Common myeloid progenitor, CD34-positive (primary cell): ENCODE measurements at regions of chr2 and their contacts with region 1.

Region 1: GRCh38 chr2:143162123-143162837 is 33.1 kb downstream of the ARHGAP15 start:
- DNase-seq: peak; percentile 81 to 90 (median 89)
- H3K4me3 ChIP-seq: peak overlapping the region in 1 of 7 experiments; percentile 5
- H3K27ac ChIP-seq: no peak overlapping the region
- H3K4me1 ChIP-seq: peaks cover 8 to 53% (median 28%) of the 10 kb centered on the region in 4 experiments
- H3K27me3 ChIP-seq: no peaks in the 10 kb centered on the region

Region 2: DNA sequence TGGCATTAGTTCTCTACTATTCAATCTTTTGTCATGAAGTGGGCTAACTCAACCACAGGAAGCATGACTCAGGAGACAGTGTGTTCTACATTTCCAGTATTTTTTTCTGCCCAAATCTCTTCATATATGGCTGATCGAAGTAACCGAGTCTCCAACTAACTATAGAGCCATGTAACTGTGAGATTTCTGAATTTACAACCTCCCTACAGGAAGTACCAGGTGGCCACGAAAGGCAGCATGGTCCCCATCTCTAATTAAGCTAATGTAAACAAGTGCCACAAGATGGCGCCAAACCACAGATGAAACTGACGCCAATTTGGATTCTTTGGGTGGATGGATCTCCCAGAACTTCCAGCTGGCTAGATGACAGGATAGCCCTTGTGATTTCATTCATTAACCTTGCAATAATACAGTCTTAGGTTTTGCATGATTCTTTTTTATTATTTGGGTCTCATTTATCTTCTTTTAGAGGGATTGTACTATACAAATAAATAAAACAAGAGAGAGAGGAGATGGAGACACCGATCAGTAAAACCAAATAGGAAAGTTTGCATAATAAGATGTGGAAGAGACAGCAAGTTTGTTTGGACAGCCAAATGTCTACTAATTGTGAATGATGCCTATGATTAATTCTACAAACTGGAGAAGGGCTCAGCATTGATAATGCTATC is 51.4 kb before region 1 on chr2:
- CTCF ChIA-PET with region 1: interaction called, 89 read pairs
- POLR2A ChIA-PET with region 1: no interaction called
- DNase-seq: peak; percentile 81 to 90 (median 88)
- H3K4me3 ChIP-seq: peak overlapping the region in 5 of 7 experiments; percentile 21 to 64 (median 43)
- H3K27ac ChIP-seq: peak overlapping the region in 1 of 2 experiments; percentile 70
- H3K4me1 ChIP-seq: peaks cover 5 to 9% (median 7%) of the 10 kb centered on the region in 4 experiments
- H3K27me3 ChIP-seq: no peaks in the 10 kb centered on the region

Region 3: DNA sequence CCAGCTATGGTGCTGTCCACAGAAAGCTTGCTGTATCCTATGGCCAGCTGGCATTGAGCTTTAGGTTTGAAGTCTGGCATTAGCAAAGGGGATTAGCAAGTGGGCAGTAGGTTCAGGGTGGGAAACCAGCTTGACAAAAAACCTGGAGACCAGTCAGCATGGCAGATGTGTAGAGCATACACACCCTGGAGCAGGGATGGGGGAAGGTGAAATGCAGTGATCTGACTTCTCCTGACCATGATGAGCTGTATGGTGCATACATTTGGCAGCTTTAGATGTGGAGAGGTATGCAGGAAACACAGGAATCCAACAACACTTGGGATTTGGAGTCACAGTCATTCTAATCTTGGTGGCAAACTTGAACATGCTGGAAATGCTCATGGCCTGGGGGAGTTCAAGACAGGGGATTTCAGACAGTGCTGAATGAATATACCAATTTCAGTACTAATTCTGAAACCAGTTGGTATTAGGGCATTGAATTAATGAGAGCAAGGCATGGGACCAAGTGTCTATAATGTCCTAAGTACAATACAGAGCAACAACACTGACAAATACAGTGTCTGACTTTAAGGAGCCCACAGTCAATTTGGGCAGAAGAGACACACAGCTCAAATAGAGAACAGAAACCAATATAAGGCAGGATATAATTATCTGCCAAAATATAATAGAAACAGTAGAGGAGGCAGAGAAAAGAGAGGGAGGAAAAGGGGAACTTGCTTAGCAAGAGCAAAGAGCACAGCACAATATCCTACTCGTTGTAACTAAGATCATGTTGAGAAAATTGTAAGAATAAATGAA is 21.2 kb before region 1 on chr2:
- CTCF ChIA-PET with region 1: interaction called, 12 read pairs
- POLR2A ChIA-PET with region 1: no interaction called
- DNase-seq: peak in 2 of 3 donors; percentile 68 to 77
- H3K4me3 ChIP-seq: peak overlapping the region in 3 of 7 experiments; percentile 34 to 55 (median 48)
- H3K27ac ChIP-seq: peak overlapping the region in 1 of 2 experiments; percentile 69
- H3K4me1 ChIP-seq: peaks cover 28 to 71% (median 52%) of the 10 kb centered on the region in 4 experiments
- H3K27me3 ChIP-seq: no peaks in the 10 kb centered on the region

Region 4: GRCh38 chr2:143177096-143177786 is 15.0 kb after region 1 on chr2:
- CTCF ChIA-PET with region 1: interaction called, 36 read pairs
- POLR2A ChIA-PET with region 1: no interaction called
- DNase-seq: peak in 1 of 3 donors; percentile 28
- H3K4me3 ChIP-seq: peak overlapping the region in 1 of 7 experiments; percentile 24
- H3K27ac ChIP-seq: peak overlapping the region in 1 of 2 experiments; percentile 57
- H3K4me1 ChIP-seq: no peaks in the 10 kb centered on the region
- H3K27me3 ChIP-seq: no peaks in the 10 kb centered on the region

Region 5: GRCh38 chr2:143217512-143218115 is 55.3 kb after region 1 on chr2:
- CTCF ChIA-PET with region 1: interaction called, 53 read pairs
- POLR2A ChIA-PET with region 1: no interaction called
- DNase-seq: peak in 2 of 3 donors; percentile 48 to 54
- H3K4me3 ChIP-seq: no peak overlapping the region
- H3K27ac ChIP-seq: no peak overlapping the region
- H3K4me1 ChIP-seq: peaks cover 0 to 13% (median 7%) of the 10 kb centered on the region in 4 experiments
- H3K27me3 ChIP-seq: no peaks in the 10 kb centered on the region

Region 6: GRCh38 chr2:143259368-143259958 is 97.2 kb after region 1 on chr2:
- CTCF ChIA-PET with region 1: interaction called, 100 read pairs
- POLR2A ChIA-PET with region 1: no interaction called
- DNase-seq: peak; percentile 84 to 88 (median 87)
- H3K4me3 ChIP-seq: peak overlapping the region in 2 of 7 experiments; percentile 50 to 60
- H3K27ac ChIP-seq: peak overlapping the region in 1 of 2 experiments; percentile 62
- H3K4me1 ChIP-seq: peaks cover 35 to 77% (median 43%) of the 10 kb centered on the region in 4 experiments
- H3K27me3 ChIP-seq: no peaks in the 10 kb centered on the region